HepG2 (cell line): ENCODE measurements at regions of chr2 and their contacts with region 1.

Region 1: GRCh38 chr2:217785544-217786045 is 217.2 kb downstream of the TNS1 start:
- DNase-seq: peak; percentile 55
- ATAC-seq: peak; percentile 68
- H3K4me3 ChIP-seq: no peak overlapping the region; a peak in 1 of 6 replicates
- H3K27ac ChIP-seq: no peak overlapping the region
- H3K4me1 ChIP-seq: peaks cover 41% of the 10 kb centered on the region
- H3K27me3 ChIP-seq: no peaks in the 10 kb centered on the region
- CTCF ChIP-seq: peak; percentile 99
- EP300 ChIP-seq: no peak
- POLR2A ChIP-seq: peak in 1 of 2 experiments; percentile 27; a peak in 1 of 4 replicates
- RAD21 ChIP-seq: peak; percentile 95

Region 2: DNA sequence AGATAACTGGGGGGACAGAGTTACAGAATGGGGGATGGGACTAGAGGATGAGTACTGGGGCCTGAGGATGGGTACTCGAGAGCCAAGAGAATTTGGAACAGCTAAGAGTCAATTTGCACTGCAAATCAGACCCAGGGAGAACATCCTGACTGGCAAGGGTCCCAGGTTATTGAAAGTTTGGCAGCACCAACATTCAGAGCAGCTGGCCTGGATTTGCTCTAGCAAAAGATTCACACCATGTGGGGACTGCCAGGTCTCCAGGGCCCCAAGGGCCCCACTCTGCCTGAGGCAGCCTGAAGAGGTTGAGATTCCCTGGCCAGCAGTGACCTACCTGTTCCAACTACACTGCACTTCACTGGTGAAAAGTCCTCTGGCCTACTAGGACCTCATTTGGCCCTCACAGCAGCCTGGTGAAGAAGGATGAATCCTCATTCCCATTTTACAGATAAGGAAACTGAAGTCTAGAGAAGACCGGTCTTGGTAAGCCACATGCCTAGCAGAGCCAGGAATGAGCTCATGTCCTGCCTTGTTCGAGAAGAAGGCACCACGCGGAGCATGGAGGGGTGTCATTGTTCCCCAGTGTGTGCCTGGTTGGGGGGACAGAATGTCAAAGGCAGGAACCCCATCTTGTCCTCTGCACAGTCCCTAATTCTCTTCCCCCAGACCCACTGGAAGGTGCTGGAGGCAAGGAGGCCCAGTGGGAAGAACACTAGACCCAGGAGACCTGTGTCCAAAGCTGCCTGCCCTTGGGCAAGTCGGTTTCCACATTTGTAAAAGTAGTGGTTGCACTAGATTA is 41.4 kb before region 1 on chr2:
- CTCF ChIA-PET with region 1: no interaction called
- POLR2A ChIA-PET with region 1: no interaction called
- in situ Hi-C with region 1: no loop called
- intact Hi-C with region 1: no loop called
- DNase-seq: no peak
- ATAC-seq: no peak
- H3K4me3 ChIP-seq: no peak overlapping the region
- H3K27ac ChIP-seq: no peak overlapping the region
- H3K4me1 ChIP-seq: no peaks in the 10 kb centered on the region
- H3K27me3 ChIP-seq: peaks cover 0 to 15% of the 10 kb centered on the region in 2 experiments; a peak in 2 of 5 replicates
- CTCF ChIP-seq: no peak
- EP300 ChIP-seq: no peak
- POLR2A ChIP-seq: no peak
- RAD21 ChIP-seq: no peak

Region 3: DNA sequence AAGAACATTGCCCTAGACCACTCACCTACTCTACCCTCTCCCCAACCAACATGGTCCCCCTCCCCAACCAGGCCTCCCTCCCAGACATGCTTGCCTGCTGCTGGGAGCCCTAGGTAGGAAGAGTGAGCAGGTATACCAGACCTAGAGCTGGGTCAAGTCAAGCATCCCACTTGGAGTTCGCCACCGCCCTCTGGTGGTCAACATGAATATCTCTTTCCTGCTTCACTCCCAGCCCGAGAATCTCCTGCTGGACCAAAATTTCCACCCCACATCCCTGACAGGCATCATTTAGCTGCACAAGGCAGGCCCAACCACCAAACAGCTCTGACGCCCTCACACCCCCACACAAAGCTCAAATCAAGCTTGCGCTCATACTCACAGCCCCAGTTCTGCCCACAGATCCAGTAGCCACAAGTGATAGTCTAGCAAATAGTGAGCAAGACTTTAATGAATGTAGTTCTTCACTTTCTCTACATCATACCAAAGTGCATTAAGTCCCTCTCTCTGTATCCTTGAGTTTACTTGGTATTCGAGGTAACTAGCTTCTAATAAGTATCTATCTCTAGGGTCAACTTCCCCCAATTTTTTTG is 101.2 kb after region 1 on chr2:
- CTCF ChIA-PET with region 1: interaction called, 56 read pairs
- POLR2A ChIA-PET with region 1: interaction called, 5 read pairs
- in situ Hi-C with region 1: no loop called
- intact Hi-C with region 1: loop called (anchors 1 kb)
- DNase-seq: peak; percentile 79
- ATAC-seq: peak; percentile 84
- H3K4me3 ChIP-seq: no peak overlapping the region
- H3K27ac ChIP-seq: no peak overlapping the region
- H3K4me1 ChIP-seq: peaks cover 19% of the 10 kb centered on the region
- H3K27me3 ChIP-seq: no peaks in the 10 kb centered on the region
- CTCF ChIP-seq: peak; percentile 94
- EP300 ChIP-seq: no peak
- POLR2A ChIP-seq: no peak
- RAD21 ChIP-seq: peak; percentile 85

Region 4: GRCh38 chr2:217922101-217923006 is 136.8 kb after region 1 on chr2:
- CTCF ChIA-PET with region 1: interaction called, 9 read pairs
- POLR2A ChIA-PET with region 1: no interaction called
- in situ Hi-C with region 1: no loop called
- intact Hi-C with region 1: loop called (anchors 1 kb)
- DNase-seq: no peak
- ATAC-seq: peak; percentile 77
- H3K4me3 ChIP-seq: no peak overlapping the region; a peak in 1 of 6 replicates
- H3K27ac ChIP-seq: no peak overlapping the region
- H3K4me1 ChIP-seq: peaks cover 60% of the 10 kb centered on the region
- H3K27me3 ChIP-seq: no peaks in the 10 kb centered on the region
- CTCF ChIP-seq: peak; percentile 87
- EP300 ChIP-seq: no peak
- POLR2A ChIP-seq: no peak
- RAD21 ChIP-seq: peak; percentile 74

Region 5: DNA sequence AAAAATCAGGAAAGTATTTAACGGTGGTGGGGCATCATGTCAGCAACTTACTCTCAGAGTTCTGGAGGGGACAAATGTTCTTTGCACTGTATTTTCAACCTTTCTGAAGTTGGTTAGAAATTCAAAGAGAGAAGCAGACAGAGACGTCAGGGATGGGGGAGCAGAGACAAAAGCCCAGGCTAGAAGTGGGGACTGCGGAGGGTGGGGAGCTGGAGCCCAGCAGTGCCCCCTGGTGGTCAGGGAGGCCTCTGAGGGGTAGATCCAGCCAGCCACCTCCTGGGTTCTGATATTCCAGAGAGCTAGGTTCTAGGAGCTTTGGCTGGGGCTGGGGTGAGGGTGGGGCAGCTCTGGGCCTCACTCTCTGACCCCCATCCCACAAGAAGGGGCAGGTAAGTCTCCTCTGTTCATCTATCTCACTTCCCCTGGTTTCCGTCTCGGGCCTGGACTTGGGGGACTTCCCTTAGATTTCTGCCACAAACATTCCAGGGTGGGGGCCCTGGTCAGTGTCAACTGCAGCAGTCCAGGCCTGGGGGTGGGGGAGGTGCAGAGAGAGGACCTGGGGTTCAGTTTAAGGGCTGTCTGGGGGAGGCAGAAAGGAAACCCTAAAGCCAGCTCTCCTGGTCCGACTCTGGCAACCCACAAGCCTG is 208.3 kb after region 1 on chr2:
- CTCF ChIA-PET with region 1: interaction called, 106 read pairs
- POLR2A ChIA-PET with region 1: interaction called, 6 read pairs
- in situ Hi-C with region 1: loop called (anchors 5 kb)
- intact Hi-C with region 1: loop called (anchors 1 kb)
- DNase-seq: peak; percentile 28
- ATAC-seq: peak; percentile 91
- H3K4me3 ChIP-seq: no peak overlapping the region
- H3K27ac ChIP-seq: no peak overlapping the region
- H3K4me1 ChIP-seq: peaks cover 15% of the 10 kb centered on the region
- H3K27me3 ChIP-seq: peaks cover 9 to 48% of the 10 kb centered on the region in 2 experiments; a peak in 4 of 5 replicates
- CTCF ChIP-seq: peak; percentile 85
- EP300 ChIP-seq: no peak
- POLR2A ChIP-seq: no peak
- RAD21 ChIP-seq: peak; percentile 40; the same call in 1 of the 2 replicates

Region 6: DNA sequence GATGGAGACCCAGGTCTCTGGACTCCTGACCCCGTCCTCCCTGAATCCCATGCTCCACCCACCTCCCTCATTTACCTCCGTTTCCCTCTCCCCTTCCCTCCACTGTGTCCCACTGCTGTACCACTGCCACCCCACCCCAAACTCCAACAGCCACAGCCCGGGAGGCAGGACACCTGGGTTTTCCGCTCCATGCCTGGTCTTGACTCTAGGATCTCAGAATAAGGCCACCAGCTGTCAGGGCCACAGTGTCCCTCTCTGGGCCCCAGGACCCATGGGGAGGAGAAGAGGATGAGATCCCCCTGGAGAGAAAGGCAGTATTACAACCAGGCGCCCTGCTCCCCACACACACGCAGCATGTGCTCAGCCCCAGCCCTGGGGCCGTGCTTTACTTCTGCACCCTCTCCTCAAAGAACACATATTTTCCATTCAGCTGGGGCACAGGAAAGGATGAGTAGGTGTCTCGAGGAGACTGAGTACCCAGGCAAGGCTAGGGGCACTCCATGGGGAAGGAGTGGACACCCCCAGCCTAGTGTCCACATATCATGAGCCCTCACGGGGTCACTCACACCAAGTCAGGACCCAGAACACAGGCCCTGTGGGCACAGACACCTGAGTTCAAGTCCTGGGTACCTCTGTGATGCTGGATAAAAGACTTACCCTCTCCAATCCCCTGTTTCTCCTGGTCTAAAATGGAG is 284.2 kb after region 1 on chr2:
- CTCF ChIA-PET with region 1: interaction called, 4 read pairs
- POLR2A ChIA-PET with region 1: no interaction called
- in situ Hi-C with region 1: no loop called
- intact Hi-C with region 1: loop called (anchors 2 kb)
- DNase-seq: no peak
- ATAC-seq: no peak
- H3K4me3 ChIP-seq: no peak overlapping the region
- H3K27ac ChIP-seq: no peak overlapping the region
- H3K4me1 ChIP-seq: no peaks in the 10 kb centered on the region
- H3K27me3 ChIP-seq: peaks cover 10 to 70% of the 10 kb centered on the region in 2 experiments; a peak in 4 of 5 replicates
- CTCF ChIP-seq: no peak
- EP300 ChIP-seq: no peak
- POLR2A ChIP-seq: no peak
- RAD21 ChIP-seq: no peak